ENCODE measurements at regions of chr15 and their contacts with region 1.

Region 1: GRCh38 chr15:65887565-65887964 is 18.3 kb downstream of the RAB11A start:
- DNase-seq: peak; percentile 79
- H3K4me3 Mint-ChIP-seq: peak overlapping the region; percentile 32
- H3K27ac Mint-ChIP-seq: peak overlapping the region; percentile 81
- H3K4me1 Mint-ChIP-seq: peaks cover 81% of the 10 kb centered on the region
- H3K27me3 Mint-ChIP-seq: no peaks in the 10 kb centered on the region

Region 2: GRCh38 chr15:65460741-65461347 is 426.7 kb before region 1 on chr15:
- CTCF ChIA-PET with region 1: no interaction called
- intact Hi-C with region 1: loop called (anchors 1 kb)
- DNase-seq: peak; percentile 72
- H3K4me3 Mint-ChIP-seq: no peak overlapping the region
- H3K27ac Mint-ChIP-seq: no peak overlapping the region
- H3K4me1 Mint-ChIP-seq: peaks cover 15% of the 10 kb centered on the region
- H3K27me3 Mint-ChIP-seq: no peaks in the 10 kb centered on the region

Region 3: DNA sequence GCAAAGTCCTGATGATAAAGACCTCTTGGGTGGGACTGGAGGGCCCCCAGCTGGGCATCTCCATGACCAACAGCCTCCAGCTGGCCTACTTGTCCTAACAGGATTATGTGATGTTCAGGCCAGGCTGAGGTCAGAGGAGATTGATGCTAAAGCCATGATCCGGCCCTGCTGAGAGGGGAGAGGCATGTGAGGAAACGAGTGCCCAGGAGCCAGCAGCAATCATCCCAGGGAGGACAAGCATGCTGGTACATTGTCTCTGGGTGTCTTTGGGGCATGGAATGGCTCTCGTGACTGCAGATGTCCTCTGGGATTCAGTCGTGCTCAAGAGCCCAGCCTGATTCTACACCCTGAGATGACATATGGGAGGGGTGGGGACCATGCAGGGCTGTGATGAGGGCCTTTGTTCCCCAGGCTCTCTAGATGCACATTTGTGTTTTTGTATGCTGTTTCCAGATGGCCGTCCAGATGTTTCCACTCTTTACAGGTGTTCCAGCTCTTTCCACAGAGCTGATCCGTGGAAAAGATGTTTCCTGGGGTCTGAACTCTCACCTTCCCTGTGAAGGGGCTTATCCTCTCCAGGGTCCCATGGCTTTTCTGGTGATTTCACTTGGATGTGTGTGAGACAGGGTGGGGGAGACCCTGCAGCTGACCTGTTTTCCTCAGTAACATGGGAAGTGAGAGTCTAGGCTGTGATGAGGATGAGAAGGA is 245.6 kb before region 1 on chr15:
- CTCF ChIA-PET with region 1: no interaction called
- intact Hi-C with region 1: no loop called
- DNase-seq: no peak
- H3K4me3 Mint-ChIP-seq: no peak overlapping the region
- H3K27ac Mint-ChIP-seq: no peak overlapping the region
- H3K4me1 Mint-ChIP-seq: peaks cover 8% of the 10 kb centered on the region
- H3K27me3 Mint-ChIP-seq: no peaks in the 10 kb centered on the region

Region 4: DNA sequence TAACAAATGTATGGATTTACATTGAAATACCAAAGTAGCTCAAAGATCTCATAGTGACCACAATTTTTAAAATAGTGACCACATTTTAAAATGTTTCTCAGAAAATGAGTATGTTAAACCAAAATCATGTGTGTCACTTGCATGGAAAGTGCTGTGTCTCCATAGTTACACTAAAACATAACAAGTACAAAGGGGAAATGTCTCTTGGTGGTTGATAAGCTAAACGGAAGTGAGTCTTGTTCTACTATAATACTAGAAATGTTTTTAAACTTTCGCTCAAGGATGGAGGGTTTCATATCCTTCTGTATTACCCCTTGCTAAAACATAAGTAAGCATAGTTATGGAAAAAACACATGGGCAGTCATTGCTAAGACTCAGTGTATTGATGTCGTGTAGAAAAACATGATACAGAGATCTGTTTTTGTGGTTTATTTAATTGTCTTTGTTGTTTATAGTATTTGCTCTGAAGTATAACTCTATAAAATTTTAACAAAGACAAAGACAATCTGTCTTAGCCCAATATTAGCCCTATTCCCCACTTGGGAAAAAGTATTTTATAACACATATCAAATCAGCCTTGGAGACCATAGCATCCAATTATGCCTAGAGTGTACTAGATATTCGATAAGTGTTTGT is 68.5 kb before region 1 on chr15:
- CTCF ChIA-PET with region 1: no interaction called
- intact Hi-C with region 1: loop called (anchors 1 kb)
- DNase-seq: no peak
- H3K4me3 Mint-ChIP-seq: peak overlapping the region; percentile 22
- H3K27ac Mint-ChIP-seq: peak overlapping the region; percentile 59
- H3K4me1 Mint-ChIP-seq: peaks cover 47% of the 10 kb centered on the region
- H3K27me3 Mint-ChIP-seq: no peaks in the 10 kb centered on the region

Region 5: DNA sequence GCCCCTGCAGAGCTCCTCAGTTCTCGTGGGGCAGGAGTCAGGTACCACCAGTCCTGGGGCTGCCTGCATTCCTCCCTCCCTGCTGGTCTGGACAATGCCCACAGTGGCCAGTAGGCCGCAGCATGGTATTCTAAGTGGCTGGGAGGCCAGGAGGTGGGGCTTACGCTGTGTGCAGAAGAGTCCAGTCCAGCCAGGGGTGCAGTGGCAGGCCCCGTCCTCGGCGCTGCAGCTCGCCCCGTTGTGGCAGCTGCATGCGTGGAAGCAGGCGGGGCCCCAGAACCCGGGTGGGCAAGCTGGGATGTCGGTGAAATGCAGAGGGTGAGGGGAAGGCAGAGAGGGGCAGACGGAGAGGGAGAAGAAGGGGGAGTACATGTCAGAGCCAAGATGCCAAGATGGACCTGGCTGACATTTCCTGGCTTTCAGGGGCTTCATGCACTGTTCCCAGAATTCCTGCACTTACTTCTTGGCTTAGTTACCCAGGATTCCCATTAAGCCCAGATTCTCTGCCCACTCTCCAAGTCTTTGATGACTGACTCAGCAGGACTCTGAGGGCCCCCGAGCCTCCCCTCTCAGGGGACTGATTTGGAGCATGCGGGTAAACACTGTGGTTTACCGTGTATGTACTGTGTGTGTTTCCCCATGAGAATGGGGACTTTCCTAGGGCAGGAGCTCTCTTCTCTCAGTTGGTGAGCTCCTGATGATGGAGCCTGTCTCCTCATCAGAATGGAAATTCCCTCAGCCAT is 29.3 kb after region 1 on chr15:
- CTCF ChIA-PET with region 1: interaction called, 3 read pairs
- intact Hi-C with region 1: loop called (anchors 1 kb)
- DNase-seq: peak; percentile 81
- H3K4me3 Mint-ChIP-seq: no peak overlapping the region
- H3K27ac Mint-ChIP-seq: peak overlapping the region; percentile 54
- H3K4me1 Mint-ChIP-seq: peaks cover 30% of the 10 kb centered on the region
- H3K27me3 Mint-ChIP-seq: no peaks in the 10 kb centered on the region

Measured in activated naive CD4-positive, alpha-beta T cell treated with anti-CD3 and anti-CD28 coated beads for 36 hours (primary cell).